ENCODE measurements at regions of chr15 and their contacts with region 1.

Region 1: GRCh38 chr15:71743861-71744382 is 66.4 kb upstream of the NR2E3 start:
- DNase-seq: peak; percentile 64
- ATAC-seq: no peak
- H3K4me3 ChIP-seq: no peak overlapping the region
- H3K27ac ChIP-seq: peak overlapping the region; percentile 1; the same call in 1 of the 2 replicates
- H3K4me1 ChIP-seq: peaks cover 50% of the 10 kb centered on the region
- H3K27me3 ChIP-seq: no peaks in the 10 kb centered on the region
- CTCF ChIP-seq: peak; percentile 78

Region 2: DNA sequence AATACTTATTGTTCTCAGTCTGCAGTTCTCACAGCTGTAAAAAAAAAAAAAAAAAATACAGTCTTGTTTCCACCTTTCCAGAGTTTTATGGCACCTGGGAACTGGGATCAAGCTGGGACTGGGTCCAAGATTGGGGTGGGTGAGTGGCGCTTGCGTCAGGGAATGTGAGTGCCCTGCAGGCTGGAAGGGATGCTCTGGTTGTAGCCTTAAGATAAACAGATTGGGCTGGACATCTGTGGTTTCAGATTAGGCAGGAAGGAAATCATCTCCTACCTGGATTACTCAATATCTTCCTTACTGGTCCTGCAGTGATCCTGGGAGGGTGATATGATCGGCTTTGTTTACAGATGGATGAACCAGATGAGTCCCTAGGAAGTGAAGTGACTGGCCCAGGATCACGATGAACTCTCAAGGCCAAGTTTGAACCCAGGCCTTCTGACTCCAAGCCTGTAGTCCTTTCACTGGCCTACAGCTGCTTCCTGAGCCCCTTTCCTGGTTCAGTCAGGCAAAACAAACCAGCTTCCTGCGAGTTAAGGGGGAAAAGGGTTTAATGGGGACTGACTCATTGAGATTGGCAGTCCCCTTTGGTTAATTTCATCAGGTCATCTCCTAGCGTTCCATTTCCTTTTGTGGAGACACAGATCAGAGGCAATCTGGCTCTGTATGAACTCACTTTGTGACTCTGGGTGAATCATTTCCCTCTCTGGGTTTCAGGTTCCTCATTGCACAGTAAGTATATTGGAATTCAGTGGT is 448.9 kb before region 1 on chr15:
- CTCF ChIA-PET with region 1: no interaction called
- POLR2A ChIA-PET with region 1: no interaction called
- intact Hi-C with region 1: loop called (anchors 2 kb)
- DNase-seq: peak; percentile 98
- ATAC-seq: peak; percentile 71
- H3K4me3 ChIP-seq: no peak overlapping the region
- H3K27ac ChIP-seq: peak overlapping the region; percentile 100
- H3K4me1 ChIP-seq: peaks cover 79% of the 10 kb centered on the region
- H3K27me3 ChIP-seq: no peaks in the 10 kb centered on the region
- CTCF ChIP-seq: no peak

Region 3: GRCh38 chr15:71532994-71533393 is 210.9 kb before region 1 on chr15:
- CTCF ChIA-PET with region 1: interaction called, 11 read pairs
- POLR2A ChIA-PET with region 1: no interaction called
- intact Hi-C with region 1: loop called (anchors 5 kb)
- DNase-seq: peak; percentile 82
- ATAC-seq: peak; percentile 60
- H3K4me3 ChIP-seq: no peak overlapping the region
- H3K27ac ChIP-seq: no peak overlapping the region
- H3K4me1 ChIP-seq: peaks cover 13% of the 10 kb centered on the region
- H3K27me3 ChIP-seq: no peaks in the 10 kb centered on the region
- CTCF ChIP-seq: peak; percentile 91

Region 4: DNA sequence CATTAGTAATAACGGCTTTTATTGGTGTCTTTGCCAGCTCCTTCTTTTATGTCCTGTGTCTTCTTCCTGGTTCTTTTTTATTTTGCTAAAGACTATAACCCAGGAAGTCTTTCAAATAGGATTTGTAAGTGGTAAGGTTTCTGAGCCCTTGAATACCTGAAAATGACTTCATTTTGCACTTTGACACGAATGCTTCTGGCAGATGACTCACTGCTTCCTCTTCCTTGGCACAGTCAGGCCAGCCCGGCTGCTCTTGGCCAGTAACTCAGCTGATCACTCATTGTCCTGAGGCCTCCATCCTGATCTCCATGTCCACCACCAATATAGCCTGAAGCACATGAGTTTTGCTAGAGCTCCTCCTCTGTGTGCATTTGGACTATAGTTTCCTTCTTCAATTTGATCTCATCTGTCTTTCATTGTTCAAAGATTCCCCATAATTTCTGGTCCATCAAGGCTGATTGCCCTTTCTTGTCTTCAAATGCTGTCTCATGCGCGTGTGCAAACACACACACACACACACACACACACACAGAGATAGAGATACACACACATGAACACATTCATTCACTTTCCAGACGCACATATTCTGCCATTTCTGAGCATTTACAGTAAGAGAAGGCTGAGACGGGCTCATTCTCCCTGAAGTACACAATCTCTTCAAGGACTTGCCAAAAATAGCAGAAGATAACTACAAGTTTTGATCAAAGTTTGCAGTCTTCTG is 17.9 kb after region 1 on chr15:
- CTCF ChIA-PET with region 1: no interaction called
- POLR2A ChIA-PET with region 1: no interaction called
- intact Hi-C with region 1: loop called (anchors 1 kb)
- DNase-seq: peak; percentile 95
- ATAC-seq: peak; percentile 96
- H3K4me3 ChIP-seq: no peak overlapping the region
- H3K27ac ChIP-seq: peak overlapping the region; percentile 76
- H3K4me1 ChIP-seq: peaks cover 12% of the 10 kb centered on the region
- H3K27me3 ChIP-seq: no peaks in the 10 kb centered on the region
- CTCF ChIP-seq: no peak

Region 5: GRCh38 chr15:71800835-71801745 is 57.2 kb after region 1 on chr15:
- CTCF ChIA-PET with region 1: interaction called, 16 read pairs
- POLR2A ChIA-PET with region 1: no interaction called
- intact Hi-C with region 1: loop called (anchors 1 kb)
- DNase-seq: peak; percentile 88
- ATAC-seq: peak; percentile 83
- H3K4me3 ChIP-seq: no peak overlapping the region
- H3K27ac ChIP-seq: peak overlapping the region; percentile 75
- H3K4me1 ChIP-seq: peaks cover 18% of the 10 kb centered on the region
- H3K27me3 ChIP-seq: no peaks in the 10 kb centered on the region
- CTCF ChIP-seq: peak; percentile 88

Region 6: GRCh38 chr15:72206677-72207000 is 462.7 kb after region 1 on chr15:
- CTCF ChIA-PET with region 1: interaction called, 16 read pairs
- POLR2A ChIA-PET with region 1: no interaction called
- intact Hi-C with region 1: no loop called
- DNase-seq: no peak
- ATAC-seq: no peak
- H3K4me3 ChIP-seq: no peak overlapping the region
- H3K27ac ChIP-seq: no peak overlapping the region
- H3K4me1 ChIP-seq: no peaks in the 10 kb centered on the region
- H3K27me3 ChIP-seq: no peaks in the 10 kb centered on the region
- CTCF ChIP-seq: no peak

Measured in PC-3 (cell line).